B cell (primary cell): ENCODE measurements at regions of chr5 and their contacts with region 1.

Region 1: DNA sequence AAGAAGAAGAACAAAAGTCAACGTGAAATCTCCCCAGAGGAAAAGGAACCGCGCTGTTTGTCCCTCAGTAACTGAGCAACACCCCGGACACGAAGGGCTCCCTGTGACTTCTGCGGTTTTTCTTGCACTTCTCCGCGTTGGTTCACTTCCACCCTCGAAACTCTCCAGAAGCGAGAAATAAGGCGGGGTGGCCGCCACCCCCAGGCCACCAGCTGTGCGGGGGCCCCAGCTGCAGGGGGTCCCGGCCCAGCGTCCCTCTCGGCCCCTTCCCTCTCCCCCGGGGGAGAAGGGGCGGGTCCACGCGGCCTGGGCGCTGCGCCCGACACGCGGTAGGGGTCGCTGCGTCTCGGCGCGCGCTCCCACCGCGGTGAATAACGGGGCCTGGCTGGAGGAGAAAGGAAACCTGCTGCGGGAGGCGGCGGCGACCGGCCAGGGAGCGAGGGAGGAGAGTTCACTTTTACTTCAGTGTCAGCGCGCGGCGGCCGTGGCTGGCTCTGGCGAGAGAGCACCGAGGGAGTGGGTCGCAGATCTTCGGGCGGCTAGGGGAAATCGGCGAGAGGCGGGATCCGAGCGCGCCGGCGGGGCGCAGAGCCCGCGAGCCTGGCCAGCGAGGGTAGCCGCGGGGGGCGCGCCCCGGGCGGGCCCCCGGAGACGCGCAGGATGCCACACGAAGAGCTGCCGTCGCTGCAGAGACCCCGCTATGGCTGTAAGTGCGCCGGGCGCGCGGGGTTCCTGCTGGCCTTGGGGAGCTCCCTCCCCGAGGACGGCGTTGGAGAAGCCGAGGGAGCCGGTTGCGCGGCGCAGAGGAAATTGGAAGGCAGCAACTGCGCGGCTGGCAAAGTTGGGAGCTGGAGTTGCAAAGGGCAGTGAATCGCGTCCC is at the start of gene IQGAP2:
- DNase-seq: peak; percentile 94
- ATAC-seq: peak; percentile 75
- H3K4me3 ChIP-seq: peak within 1 kb of the TSS; percentile 61 to 78 (median 70)
- H3K4me3 Mint-ChIP-seq: peak within 1 kb of the TSS; percentile 97
- H3K27ac ChIP-seq: peak within 1 kb of the TSS; percentile 95 to 96
- H3K27ac Mint-ChIP-seq: peak within 1 kb of the TSS; percentile 95
- H3K4me1 ChIP-seq: peaks cover 23 to 45% of the 10 kb centered on the region in 2 donors
- H3K4me1 Mint-ChIP-seq: peaks cover 49% of the 10 kb centered on the region
- H3K27me3 ChIP-seq: peaks cover 0 to 4% (median 0%) of the 10 kb centered on the region in 4 experiments
- H3K27me3 Mint-ChIP-seq: peaks cover 5% of the 10 kb centered on the region
- CTCF ChIP-seq: peak; percentile 79
- total RNA-seq, gene IQGAP2: 12.3 and 15.0 TPM in 2 replicates

Region 2: DNA sequence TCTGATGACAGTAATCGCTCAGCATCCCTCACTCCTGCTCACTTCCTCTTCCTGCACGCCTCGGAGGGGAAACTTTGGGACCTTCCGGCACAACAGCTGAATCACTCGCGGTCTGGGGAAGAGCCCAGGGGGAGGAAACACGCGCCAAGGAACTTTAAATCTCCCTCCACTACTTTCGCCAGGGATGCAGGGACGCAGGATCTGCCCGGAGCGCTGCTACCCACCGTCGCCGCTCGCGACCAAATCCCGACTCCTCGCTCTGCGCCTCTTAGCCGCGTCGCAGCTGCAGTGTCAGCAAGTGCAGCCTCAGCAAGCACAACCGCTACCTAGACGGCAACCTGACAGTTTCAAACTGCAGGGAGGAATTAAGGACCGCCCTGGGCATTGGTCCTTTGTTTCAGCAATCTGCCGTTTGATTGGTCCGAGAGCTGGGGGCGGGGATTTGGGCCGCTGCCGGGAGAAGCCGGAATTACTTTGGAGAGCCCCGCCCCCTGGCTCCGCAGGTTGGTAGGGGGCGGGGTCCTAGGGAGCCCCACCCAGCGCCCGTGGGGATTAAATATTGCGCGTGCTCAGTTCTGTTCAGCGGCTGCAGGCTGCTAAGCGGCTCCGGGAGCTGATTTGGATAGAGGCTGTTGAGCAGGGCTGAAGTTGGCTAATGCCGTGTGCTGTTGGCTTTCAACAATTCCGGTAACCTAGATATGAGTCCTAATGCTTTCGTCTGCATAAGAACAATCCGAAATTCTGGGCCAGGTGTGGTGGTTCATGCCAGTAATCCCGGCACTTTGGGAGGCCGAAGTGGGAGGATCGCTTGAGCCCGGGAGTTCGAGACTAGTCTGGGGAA is 685.8 kb before region 1 on chr5 and contains the start of gene POC5:
- CTCF ChIA-PET with region 1: no interaction called
- POLR2A ChIA-PET with region 1: no interaction called
- intact Hi-C with region 1: loop called (anchors 5 kb)
- DNase-seq: peak; percentile 98
- ATAC-seq: peak; percentile 95
- H3K4me3 ChIP-seq: peak within 1 kb of the TSS; percentile 80 to 99 (median 89)
- H3K4me3 Mint-ChIP-seq: peak within 1 kb of the TSS; percentile 100
- H3K27ac ChIP-seq: peak within 1 kb of the TSS; percentile 80 to 85
- H3K27ac Mint-ChIP-seq: peak within 1 kb of the TSS; percentile 99
- H3K4me1 ChIP-seq: peaks cover 12 to 18% of the 10 kb centered on the region in 2 donors
- H3K4me1 Mint-ChIP-seq: peaks cover 37% of the 10 kb centered on the region
- H3K27me3 ChIP-seq: peaks cover 0 to 4% (median 0%) of the 10 kb centered on the region in 4 experiments
- H3K27me3 Mint-ChIP-seq: peaks cover 6% of the 10 kb centered on the region
- CTCF ChIP-seq: no peak
- total RNA-seq, gene POC5: 22.7 and 25.5 TPM in 2 replicates

Region 3: GRCh38 chr5:76351577-76351976 is 51.5 kb before region 1 on chr5:
- CTCF ChIA-PET with region 1: interaction called, 5 read pairs
- POLR2A ChIA-PET with region 1: interaction called, 5 read pairs
- intact Hi-C with region 1: loop called (anchors 1 kb)
- DNase-seq: peak; percentile 78
- ATAC-seq: peak; percentile 95
- H3K4me3 ChIP-seq: no peak overlapping the region
- H3K4me3 Mint-ChIP-seq: peak overlapping the region; percentile 46
- H3K27ac ChIP-seq: no peak overlapping the region
- H3K27ac Mint-ChIP-seq: peak overlapping the region; percentile 46
- H3K4me1 ChIP-seq: peaks cover 16 to 20% of the 10 kb centered on the region in 2 donors
- H3K4me1 Mint-ChIP-seq: peaks cover 18% of the 10 kb centered on the region
- H3K27me3 ChIP-seq: peaks cover 0 to 7% (median 1%) of the 10 kb centered on the region in 4 experiments
- H3K27me3 Mint-ChIP-seq: peaks cover 4% of the 10 kb centered on the region
- CTCF ChIP-seq: no peak

Region 4: GRCh38 chr5:76582230-76583162 is 179.4 kb after region 1 on chr5:
- CTCF ChIA-PET with region 1: interaction called, 43 read pairs
- POLR2A ChIA-PET with region 1: interaction called, 4 read pairs
- intact Hi-C with region 1: loop called (anchors 1 kb)
- DNase-seq: peak; percentile 49
- ATAC-seq: peak; percentile 56
- H3K4me3 ChIP-seq: peak overlapping the region in 1 of 5 experiments; percentile 22
- H3K4me3 Mint-ChIP-seq: no peak overlapping the region
- H3K27ac ChIP-seq: no peak overlapping the region
- H3K27ac Mint-ChIP-seq: peak overlapping the region; percentile 46
- H3K4me1 ChIP-seq: peaks cover 4 to 12% of the 10 kb centered on the region in 2 donors
- H3K4me1 Mint-ChIP-seq: peaks cover 18% of the 10 kb centered on the region
- H3K27me3 ChIP-seq: no peaks in the 10 kb centered on the region
- H3K27me3 Mint-ChIP-seq: no peaks in the 10 kb centered on the region
- CTCF ChIP-seq: no peak